ENCODE measurements at regions of chr3 and their contacts with region 1.

Region 1: DNA sequence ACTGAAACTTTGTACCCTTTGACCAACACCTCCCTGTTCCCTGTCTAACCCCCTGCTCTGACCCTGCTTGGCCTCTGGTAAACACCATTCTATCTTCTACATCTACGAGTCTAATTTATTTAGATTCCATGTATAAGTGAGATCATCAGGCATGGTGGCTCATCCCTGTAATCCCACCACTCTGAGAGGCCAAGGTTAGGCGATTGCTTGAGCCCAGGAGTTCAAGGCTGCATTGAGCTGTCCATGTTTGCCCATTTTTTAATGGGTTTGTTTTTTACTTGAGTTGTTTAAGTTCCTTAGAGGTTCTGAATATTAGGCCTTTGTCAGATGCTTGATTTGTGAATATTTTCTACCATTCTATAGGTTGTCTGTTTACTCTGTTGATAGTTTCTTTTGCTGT is 16.9 kb downstream of the FBXW12 start:
- DNase-seq: no peak
- ATAC-seq: no peak
- H3K4me3 ChIP-seq: no peak overlapping the region
- H3K27ac ChIP-seq: no peak overlapping the region
- H3K4me1 ChIP-seq: no peaks in the 10 kb centered on the region
- H3K27me3 ChIP-seq: peaks cover 9% of the 10 kb centered on the region; the same call in 1 of the 2 replicates
- CTCF ChIP-seq: no peak
- POLR2A ChIP-seq: no peak
- RAD21 ChIP-seq: no peak

Region 2: DNA sequence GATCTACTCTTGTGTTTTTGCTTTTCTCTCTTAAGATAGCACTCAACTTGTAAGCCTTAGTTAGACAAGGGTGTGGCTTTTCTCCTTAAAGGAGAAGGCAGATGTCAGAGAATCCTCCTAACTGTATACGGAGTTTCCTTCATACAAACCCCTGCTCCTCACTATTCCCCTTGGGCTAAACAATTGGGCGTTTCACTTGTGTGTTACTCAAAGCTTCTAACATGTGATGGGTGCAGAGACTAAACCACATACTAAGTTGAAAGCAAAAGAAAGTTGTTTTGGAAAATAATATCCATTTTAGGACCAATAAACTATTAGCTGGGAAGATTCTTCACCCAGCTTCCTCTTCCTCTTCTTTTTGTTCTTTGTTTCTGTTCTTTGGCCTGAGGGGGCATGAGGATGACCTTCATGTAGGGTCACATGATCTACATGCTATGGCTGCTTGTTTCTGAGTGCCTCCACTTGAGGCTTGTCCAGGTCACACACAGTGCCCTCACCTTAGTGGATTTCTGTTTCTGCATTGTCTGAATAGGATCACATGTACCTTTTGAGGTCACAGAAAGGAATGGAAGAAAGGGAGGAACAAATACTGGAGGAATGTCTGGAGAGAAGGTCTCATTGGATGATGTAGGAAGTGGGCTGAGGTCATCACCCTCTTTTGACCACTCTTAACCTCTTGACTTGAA is 70.0 kb before region 1 on chr3:
- CTCF ChIA-PET with region 1: no interaction called
- POLR2A ChIA-PET with region 1: no interaction called
- dilution Hi-C with region 1: no loop called
- in situ Hi-C with region 1: no loop called
- intact Hi-C with region 1: loop called (anchors 5 kb)
- DNase-seq: no peak
- ATAC-seq: no peak
- H3K4me3 ChIP-seq: no peak overlapping the region
- H3K27ac ChIP-seq: no peak overlapping the region
- H3K4me1 ChIP-seq: no peaks in the 10 kb centered on the region
- H3K27me3 ChIP-seq: peaks cover 12% of the 10 kb centered on the region
- CTCF ChIP-seq: no peak
- POLR2A ChIP-seq: no peak
- RAD21 ChIP-seq: no peak

Region 3: DNA sequence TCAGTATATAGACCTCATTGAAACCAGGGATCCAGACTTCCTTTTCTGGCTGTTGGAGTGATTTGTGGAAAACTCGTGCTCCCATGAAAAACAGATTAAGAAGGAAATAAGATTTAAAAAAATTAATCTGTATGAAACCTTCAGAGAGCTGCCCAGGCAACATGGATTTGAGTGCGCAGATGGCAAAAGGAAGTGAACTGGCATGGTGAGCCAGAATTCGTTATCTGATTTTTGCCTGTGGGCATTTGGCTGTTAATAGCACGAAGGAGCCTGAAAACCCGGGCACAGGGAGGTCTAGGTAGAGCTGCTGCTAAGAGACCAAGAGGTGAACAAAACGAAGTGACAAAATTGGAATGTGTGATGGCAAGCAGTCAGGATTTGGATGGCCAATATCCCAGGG is 36.4 kb before region 1 on chr3:
- CTCF ChIA-PET with region 1: no interaction called
- POLR2A ChIA-PET with region 1: no interaction called
- dilution Hi-C with region 1: no loop called
- in situ Hi-C with region 1: no loop called
- intact Hi-C with region 1: loop called (anchors 5 kb)
- DNase-seq: no peak
- ATAC-seq: no peak
- H3K4me3 ChIP-seq: no peak overlapping the region
- H3K27ac ChIP-seq: no peak overlapping the region
- H3K4me1 ChIP-seq: no peaks in the 10 kb centered on the region
- H3K27me3 ChIP-seq: peaks cover 39% of the 10 kb centered on the region
- CTCF ChIP-seq: no peak
- POLR2A ChIP-seq: no peak
- RAD21 ChIP-seq: no peak

Region 4: DNA sequence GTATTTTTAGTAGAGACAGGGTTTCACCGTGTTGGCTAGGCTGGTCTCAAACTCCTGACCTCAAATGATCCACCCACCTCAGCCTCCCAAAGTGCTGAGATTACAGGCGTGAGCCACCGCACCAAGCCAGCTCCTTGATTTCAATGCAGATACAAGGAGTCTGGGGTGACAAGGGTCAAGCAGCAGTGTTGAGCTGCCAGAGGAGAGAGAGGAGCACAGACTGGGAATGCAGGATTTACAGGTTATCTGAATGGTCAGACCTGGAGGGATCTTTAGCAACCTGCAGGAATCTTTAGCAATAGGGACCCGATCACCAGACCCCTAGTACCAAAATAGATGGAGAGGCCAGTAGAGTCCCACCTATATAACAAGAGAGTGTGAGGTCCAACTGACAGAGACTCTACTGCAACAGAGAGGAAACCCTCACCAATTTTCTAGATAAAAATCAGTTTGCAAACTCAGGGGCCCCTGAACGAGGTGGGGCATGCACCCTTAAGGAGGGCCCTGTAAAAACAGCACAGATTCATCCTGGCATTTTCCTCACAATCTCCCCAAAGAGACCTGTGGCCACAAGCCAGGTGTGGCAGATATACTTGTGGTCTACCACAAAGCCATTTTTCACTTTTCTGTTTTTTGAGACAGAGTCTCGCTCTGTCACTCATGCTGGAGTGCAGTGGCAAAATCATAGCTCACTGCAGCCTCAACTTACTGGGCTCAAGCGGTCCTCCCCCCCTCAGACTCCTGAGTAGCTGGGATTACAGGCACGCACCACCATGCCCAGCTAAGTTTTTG is 125.7 kb after region 1 on chr3:
- CTCF ChIA-PET with region 1: no interaction called
- POLR2A ChIA-PET with region 1: no interaction called
- dilution Hi-C with region 1: no loop called
- in situ Hi-C with region 1: no loop called
- intact Hi-C with region 1: no loop called
- DNase-seq: no peak
- ATAC-seq: no peak
- H3K4me3 ChIP-seq: no peak overlapping the region
- H3K27ac ChIP-seq: no peak overlapping the region
- H3K4me1 ChIP-seq: 0 out of 2 replicates have a peak, but pooled peaks cover 2% of the 10 kb centered on the region
- H3K27me3 ChIP-seq: no peaks in the 10 kb centered on the region
- CTCF ChIP-seq: no peak
- POLR2A ChIP-seq: no peak
- RAD21 ChIP-seq: no peak